ENCODE measurements at regions of chr1 and their contacts with region 1.

Region 1: DNA sequence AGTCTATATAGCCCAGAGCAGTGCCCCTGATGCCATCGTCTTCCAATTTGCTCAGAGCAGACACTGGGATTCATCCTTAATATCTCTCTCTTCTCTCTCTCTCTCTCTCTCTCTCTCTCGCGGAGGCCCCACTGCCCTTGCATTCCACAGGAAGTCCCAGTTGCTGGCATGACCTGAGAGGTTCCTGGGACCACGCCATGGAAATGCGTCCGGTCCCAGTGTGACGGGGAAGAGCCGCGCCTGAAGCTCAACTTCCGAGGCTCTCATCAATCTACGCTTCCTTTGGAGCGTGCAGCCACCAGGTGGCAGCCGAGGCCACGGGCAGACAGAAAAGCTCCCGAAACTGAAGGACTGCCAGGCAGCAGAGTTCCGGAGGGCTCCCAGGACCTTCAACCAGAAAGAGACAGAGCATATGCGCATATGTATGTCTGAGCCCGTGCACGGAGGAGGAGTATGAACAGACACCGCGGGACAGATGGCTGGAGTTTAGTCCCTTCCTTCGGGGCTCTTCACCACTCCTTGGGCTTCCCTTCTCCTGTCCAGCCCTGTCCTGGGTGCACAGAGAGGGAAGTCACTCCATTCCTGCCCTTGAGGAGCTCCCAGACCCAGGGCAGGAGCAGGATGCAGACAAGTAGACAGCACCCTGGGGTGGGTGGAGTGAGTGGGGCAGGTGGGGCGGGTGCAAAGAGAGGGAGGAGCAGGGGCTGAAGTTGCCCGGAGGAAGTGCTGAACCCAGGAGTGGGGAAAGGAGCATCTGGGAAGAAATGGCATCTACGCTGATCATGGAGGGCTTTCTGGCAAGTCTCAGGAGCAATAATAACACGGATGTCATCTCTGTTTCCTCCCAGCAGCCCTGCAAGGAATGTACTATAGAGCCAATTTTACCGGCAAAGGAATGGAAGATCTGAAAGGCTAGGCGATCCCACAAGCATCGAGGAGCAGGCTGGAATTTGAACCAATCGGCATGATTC is 10.5 kb downstream of the PDZK1IP1 start:
- DNase-seq: peak; percentile 89
- ATAC-seq: peak; percentile 81
- H3K4me3 ChIP-seq: peak overlapping the region; percentile 49 to 65
- H3K27ac ChIP-seq: peak overlapping the region; percentile 41
- H3K4me1 ChIP-seq: peaks cover 4 to 26% of the 10 kb centered on the region in 2 experiments
- H3K27me3 ChIP-seq: no peaks in the 10 kb centered on the region
- CTCF ChIP-seq: peak; percentile 89 to 95 (median 89)
- POLR2A ChIP-seq: no peak
- RAD21 ChIP-seq: peak; percentile 95

Region 2: GRCh38 chr1:45957684-45958083 is 1221.6 kb before region 1 on chr1:
- CTCF ChIA-PET with region 1: no interaction called
- POLR2A ChIA-PET with region 1: no interaction called
- RAD21 ChIA-PET with region 1: no interaction called
- intact Hi-C with region 1: no loop called
- DNase-seq: no peak
- ATAC-seq: no peak
- H3K4me3 ChIP-seq: no peak overlapping the region
- H3K27ac ChIP-seq: no peak overlapping the region
- H3K4me1 ChIP-seq: peaks cover 11 to 24% of the 10 kb centered on the region in 2 experiments
- H3K27me3 ChIP-seq: no peaks in the 10 kb centered on the region
- CTCF ChIP-seq: no peak
- POLR2A ChIP-seq: no peak
- RAD21 ChIP-seq: no peak

Region 3: DNA sequence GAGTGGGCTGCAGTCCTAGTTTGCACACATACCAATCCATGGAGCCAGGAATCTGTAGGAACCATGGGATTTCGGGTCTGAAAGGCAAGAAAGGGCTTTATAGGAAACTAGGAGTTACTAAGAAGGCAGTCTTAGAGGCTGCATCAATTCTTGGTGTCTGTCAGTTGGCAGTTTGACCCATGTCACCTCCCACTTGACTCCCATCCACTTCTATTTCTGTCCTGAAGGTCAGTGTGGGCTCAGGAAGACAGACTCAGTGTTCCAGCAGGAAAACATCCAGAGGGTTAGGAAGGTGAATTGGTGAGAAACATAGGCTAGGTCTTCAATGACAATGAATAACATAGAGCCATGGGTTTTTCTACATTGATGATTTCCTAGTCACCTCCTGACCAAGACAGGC is 242.0 kb before region 1 on chr1:
- CTCF ChIA-PET with region 1: no interaction called
- POLR2A ChIA-PET with region 1: no interaction called
- RAD21 ChIA-PET with region 1: no interaction called
- intact Hi-C with region 1: loop called (anchors 10 kb)
- DNase-seq: no peak
- ATAC-seq: no peak
- H3K4me3 ChIP-seq: no peak overlapping the region
- H3K27ac ChIP-seq: no peak overlapping the region
- H3K4me1 ChIP-seq: no peaks in the 10 kb centered on the region
- H3K27me3 ChIP-seq: peaks cover 15% of the 10 kb centered on the region
- CTCF ChIP-seq: no peak
- POLR2A ChIP-seq: no peak
- RAD21 ChIP-seq: no peak

Region 4: GRCh38 chr1:47192458-47193384 is 13.4 kb after region 1 on chr1:
- CTCF ChIA-PET with region 1: interaction called, 31 read pairs
- POLR2A ChIA-PET with region 1: interaction called, 3 read pairs
- RAD21 ChIA-PET with region 1: no interaction called
- intact Hi-C with region 1: no loop called
- DNase-seq: peak; percentile 42
- ATAC-seq: peak; percentile 85
- H3K4me3 ChIP-seq: no peak overlapping the region
- H3K27ac ChIP-seq: no peak overlapping the region
- H3K4me1 ChIP-seq: peaks cover 3 to 19% of the 10 kb centered on the region in 2 experiments; a peak in 3 of 4 replicates
- H3K27me3 ChIP-seq: no peaks in the 10 kb centered on the region
- CTCF ChIP-seq: peak; percentile 76 to 99 (median 98)
- POLR2A ChIP-seq: no peak
- RAD21 ChIP-seq: peak; percentile 85

Region 5: DNA sequence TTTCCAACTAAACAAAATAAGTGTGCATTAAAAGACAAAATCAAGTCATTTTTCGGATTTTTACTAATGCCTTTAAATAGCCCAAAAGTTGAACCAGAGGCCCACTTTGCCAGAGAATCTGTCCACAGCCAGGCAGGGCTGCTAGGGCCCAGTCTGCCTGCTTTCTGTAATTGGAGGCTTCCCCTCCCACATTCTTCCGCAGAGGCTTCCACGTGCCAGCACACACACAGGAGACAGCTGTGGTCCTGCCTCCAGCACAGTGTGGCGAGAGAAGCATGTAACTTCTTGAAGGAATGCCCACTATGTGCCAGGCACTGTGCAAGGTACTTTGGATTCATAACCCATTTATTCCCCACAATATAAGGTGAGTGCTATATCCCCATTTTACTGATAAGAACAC is 21.9 kb after region 1 on chr1:
- CTCF ChIA-PET with region 1: interaction called, 4 read pairs
- POLR2A ChIA-PET with region 1: no interaction called
- RAD21 ChIA-PET with region 1: interaction called in 1 of 2 experiments, 10 read pairs
- intact Hi-C with region 1: no loop called
- DNase-seq: no peak
- ATAC-seq: no peak
- H3K4me3 ChIP-seq: no peak overlapping the region
- H3K27ac ChIP-seq: no peak overlapping the region
- H3K4me1 ChIP-seq: peaks cover 0 to 3% of the 10 kb centered on the region in 2 experiments; a peak in 1 of 4 replicates
- H3K27me3 ChIP-seq: no peaks in the 10 kb centered on the region
- CTCF ChIP-seq: no peak
- POLR2A ChIP-seq: no peak
- RAD21 ChIP-seq: no peak

Region 6: DNA sequence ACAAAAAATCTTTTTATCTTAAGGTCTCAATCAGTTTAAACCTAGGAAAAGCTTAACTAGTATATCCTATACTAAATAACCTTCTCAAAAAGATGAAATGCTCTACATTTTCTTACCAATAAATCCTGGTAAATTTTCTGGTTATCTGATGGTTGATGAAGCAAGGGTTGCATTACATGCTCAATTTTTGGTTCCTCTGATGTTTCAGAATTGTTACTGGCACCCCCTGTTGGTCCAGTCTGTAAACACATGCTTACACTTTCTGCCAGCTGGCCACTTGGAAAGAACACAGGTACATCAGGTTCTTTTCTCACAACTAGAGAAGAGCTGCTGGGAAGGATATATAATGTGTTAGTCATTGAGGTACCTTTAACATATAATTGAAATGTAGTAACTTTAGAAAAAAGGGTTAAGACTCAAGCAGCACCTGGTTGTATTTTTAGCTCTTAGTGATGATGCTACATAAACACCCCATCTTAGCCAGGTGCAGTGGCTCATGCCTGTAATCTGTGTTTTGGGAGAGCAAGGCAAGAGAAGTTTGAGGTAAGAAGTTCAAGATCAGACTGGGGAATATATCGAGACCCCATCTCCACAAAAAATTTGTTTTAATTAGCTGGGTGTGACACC is 83.6 kb after region 1 on chr1:
- CTCF ChIA-PET with region 1: interaction called, 19 read pairs
- POLR2A ChIA-PET with region 1: no interaction called
- RAD21 ChIA-PET with region 1: interaction called, 5 to 6 read pairs
- intact Hi-C with region 1: loop called (anchors 2 kb)
- DNase-seq: peak; percentile 24
- ATAC-seq: peak; percentile 82
- H3K4me3 ChIP-seq: no peak overlapping the region
- H3K27ac ChIP-seq: no peak overlapping the region
- H3K4me1 ChIP-seq: no peaks in the 10 kb centered on the region
- H3K27me3 ChIP-seq: no peaks in the 10 kb centered on the region
- CTCF ChIP-seq: peak; percentile 55 to 74 (median 69); a peak in 5 of 6 replicates
- POLR2A ChIP-seq: no peak
- RAD21 ChIP-seq: peak; percentile 44

Region 7: DNA sequence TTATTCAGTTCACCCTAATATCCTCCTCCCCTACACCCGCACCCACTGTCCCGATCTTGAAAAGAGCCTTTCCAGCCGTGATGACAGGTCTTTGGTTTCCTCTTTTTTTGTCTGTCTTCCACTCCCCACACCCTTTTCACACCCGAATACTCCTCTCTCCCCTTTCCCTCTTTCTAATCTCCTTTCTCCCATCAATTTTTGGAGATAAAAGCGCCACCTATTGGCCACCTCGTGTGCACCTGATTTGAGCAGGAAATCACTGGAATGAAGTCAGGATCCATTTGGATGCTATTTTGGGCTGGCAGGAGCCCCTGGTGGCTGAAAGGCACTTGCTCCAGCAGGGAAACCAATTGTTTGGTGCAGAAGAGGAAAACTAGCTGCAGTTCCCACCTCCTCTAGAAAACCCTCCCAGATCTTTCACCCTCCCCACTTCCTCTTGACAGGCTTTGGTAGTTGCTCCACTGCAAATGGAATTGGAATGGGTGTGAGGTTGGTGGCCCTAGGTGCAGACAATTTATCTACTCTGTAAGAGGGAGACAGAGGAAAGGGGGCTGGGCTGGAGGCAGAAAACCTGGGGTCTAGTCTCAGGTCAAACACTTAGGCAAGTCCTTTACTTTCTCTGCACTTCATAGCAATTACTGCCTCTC is 245.2 kb after region 1 on chr1:
- CTCF ChIA-PET with region 1: interaction called, 7 read pairs
- POLR2A ChIA-PET with region 1: interaction called, 4 read pairs
- RAD21 ChIA-PET with region 1: no interaction called
- intact Hi-C with region 1: loop called (anchors 1 kb)
- DNase-seq: peak; percentile 63
- ATAC-seq: peak; percentile 91
- H3K4me3 ChIP-seq: no peak overlapping the region
- H3K27ac ChIP-seq: no peak overlapping the region
- H3K4me1 ChIP-seq: peaks cover 3 to 11% of the 10 kb centered on the region in 2 experiments; a peak in 2 of 4 replicates
- H3K27me3 ChIP-seq: no peaks in the 10 kb centered on the region
- CTCF ChIP-seq: peak; percentile 91 to 98 (median 96)
- POLR2A ChIP-seq: no peak
- RAD21 ChIP-seq: peak; percentile 70

Region 8: DNA sequence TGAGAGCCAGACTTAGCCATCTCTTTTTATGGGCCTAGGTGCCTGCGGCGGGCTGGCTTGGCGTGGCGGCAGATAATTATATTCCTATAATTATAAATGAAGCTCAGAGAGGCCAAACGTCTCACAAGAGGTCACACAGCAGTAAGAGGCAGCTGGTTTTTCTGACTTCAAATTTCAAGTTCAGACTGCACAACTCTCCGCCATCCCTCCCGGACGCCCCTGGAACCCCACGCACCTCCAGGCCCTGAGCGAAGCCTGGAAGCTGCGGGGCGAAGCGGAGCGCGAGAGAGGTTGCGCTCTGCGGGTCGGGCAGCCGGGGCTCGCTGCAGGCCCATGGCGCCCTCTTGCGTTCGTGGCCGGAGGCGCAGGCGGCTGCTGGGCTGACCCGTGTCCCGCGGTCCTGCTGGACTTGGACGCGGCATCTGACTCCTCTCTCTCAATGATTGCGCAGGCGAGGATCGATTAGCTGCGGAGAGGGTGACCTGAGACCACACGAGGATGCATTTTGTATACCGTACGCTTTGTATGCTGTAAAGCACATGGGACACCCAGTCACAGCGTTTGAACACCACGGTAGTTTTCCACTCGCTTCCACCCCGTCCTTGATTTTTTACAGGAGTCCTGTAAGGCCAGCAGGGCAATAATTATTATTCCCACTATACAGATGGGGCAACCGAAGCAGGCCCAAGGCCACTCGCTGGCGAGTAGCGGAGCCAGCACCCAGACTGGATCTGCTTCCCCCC is 531.2 kb after region 1 on chr1:
- CTCF ChIA-PET with region 1: interaction called, 5 read pairs
- POLR2A ChIA-PET with region 1: no interaction called
- RAD21 ChIA-PET with region 1: interaction called in 1 of 2 experiments, 3 read pairs
- intact Hi-C with region 1: loop called (anchors 5 kb)
- DNase-seq: peak; percentile 28
- ATAC-seq: peak; percentile 88
- H3K4me3 ChIP-seq: peak overlapping the region; percentile 16 to 57; a peak in 3 of 4 replicates
- H3K27ac ChIP-seq: no peak overlapping the region
- H3K4me1 ChIP-seq: peaks cover 0 to 18% of the 10 kb centered on the region in 2 experiments; a peak in 1 of 4 replicates
- H3K27me3 ChIP-seq: peaks cover 28% of the 10 kb centered on the region
- CTCF ChIP-seq: peak; percentile 91 to 98 (median 92)
- POLR2A ChIP-seq: no peak
- RAD21 ChIP-seq: peak; percentile 96

Measured in HCT116 (cell line).